ENCODE measurements at regions of chr2 and their contacts with region 1.

Region 1: DNA sequence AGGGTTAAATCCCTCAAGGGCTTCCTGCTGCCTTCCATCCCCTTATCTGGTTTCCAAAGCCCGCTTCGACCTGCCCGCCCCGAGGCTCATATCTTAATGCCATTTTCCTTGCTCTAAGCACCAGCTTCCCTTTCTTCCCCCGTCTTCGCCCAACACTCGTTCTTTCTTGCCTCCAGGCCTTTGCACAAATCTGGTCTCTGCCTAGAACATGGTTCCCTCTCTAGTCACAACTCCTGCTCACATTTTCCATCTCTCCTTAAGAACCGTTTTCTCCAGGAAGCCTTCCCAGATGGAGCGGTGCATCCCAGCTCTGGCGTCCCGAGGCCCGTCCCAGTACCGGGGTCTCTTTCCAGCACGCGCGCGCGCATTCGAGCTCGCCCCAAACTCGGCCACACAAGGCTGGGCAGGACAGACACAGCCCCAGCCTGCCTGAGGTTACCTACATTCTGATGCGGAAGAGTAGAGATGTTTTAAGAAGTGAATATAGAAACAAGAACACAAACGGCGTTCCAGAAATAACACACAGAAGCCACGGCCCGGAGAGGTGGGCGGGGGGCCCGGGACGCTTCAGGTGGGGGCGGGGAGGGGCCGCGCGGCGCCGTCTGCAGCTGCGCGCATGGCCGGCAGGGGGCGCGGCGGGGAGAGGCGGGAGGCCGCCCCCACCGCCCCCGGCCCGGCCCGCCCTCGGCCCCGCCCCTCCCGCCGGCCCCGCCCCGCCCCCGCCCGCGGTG is at the start of gene DGKD:
- DNase-seq: peak; percentile 63 to 86 (median 77)
- ATAC-seq: peak; percentile 90
- H3K4me3 ChIP-seq: peak within 1 kb of the TSS; percentile 83 to 87
- H3K4me3 Mint-ChIP-seq: peak within 1 kb of the TSS; percentile 92
- H3K27ac ChIP-seq: peak within 1 kb of the TSS; percentile 34 to 44
- H3K27ac Mint-ChIP-seq: peak within 1 kb of the TSS; percentile 89
- H3K4me1 ChIP-seq: peaks cover 53% of the 10 kb centered on the region
- H3K4me1 Mint-ChIP-seq: peaks cover 71% of the 10 kb centered on the region
- H3K27me3 ChIP-seq: no peaks in the 10 kb centered on the region
- H3K27me3 Mint-ChIP-seq: no peaks in the 10 kb centered on the region
- CTCF ChIP-seq: no peak
- total RNA-seq, gene DGKD: 209 to 244 TPM

Region 2: DNA sequence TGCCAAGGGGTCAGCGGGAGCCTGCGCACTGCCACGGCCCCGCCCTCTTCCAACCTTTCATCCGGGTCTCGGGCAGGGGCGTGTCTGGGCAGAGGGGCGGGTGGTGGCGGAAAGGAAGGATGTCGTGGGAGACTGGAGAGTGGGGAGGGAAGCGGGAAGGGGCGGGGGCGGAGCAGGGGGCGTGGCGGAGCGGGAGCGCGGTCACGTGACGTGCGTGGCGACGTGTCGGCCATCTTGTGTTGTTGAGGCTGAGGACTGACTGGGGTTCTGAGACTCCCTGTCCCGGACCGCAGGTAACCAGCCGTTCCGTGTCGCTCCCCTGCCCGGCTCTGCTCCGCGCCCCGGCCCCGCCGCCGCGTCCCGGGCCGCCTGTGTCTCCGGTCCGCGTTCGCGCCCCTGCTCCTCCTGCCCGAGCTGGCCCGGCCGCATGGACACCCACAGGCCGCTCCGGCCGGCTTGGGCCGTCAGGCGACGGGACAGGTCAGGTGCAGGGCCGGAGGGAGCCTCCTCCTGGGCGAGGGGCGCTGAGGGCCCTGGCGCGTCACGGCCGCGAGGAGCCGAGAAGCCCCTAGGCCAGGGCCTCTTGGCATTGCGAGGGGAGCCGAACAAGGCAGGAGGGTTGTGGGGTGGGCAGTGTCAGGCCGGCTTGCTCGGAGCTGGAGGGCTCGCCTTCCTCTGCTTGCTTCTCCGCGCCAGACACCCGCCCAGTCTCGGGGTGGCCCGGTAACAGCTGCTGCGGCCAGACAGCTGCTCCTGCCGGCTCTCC is 656.7 kb before region 1 on chr2 and contains the start of gene GIGYF2:
- CTCF ChIA-PET with region 1: no interaction called
- POLR2A ChIA-PET with region 1: no interaction called
- intact Hi-C with region 1: loop called in 1 of 2 experiments (anchors 5 kb)
- DNase-seq: peak; percentile 78 to 95 (median 91)
- ATAC-seq: peak; percentile 83
- H3K4me3 ChIP-seq: peak within 1 kb of the TSS; percentile 89 to 92
- H3K4me3 Mint-ChIP-seq: peak within 1 kb of the TSS; percentile 94
- H3K27ac ChIP-seq: peak within 1 kb of the TSS; percentile 74 to 75
- H3K27ac Mint-ChIP-seq: peak within 1 kb of the TSS; percentile 89
- H3K4me1 ChIP-seq: peaks cover 41% of the 10 kb centered on the region
- H3K4me1 Mint-ChIP-seq: peaks cover 37% of the 10 kb centered on the region
- H3K27me3 ChIP-seq: no peaks in the 10 kb centered on the region
- H3K27me3 Mint-ChIP-seq: no peaks in the 10 kb centered on the region
- CTCF ChIP-seq: no peak
- total RNA-seq, gene GIGYF2: 40.5 to 52.2 TPM

Region 3: DNA sequence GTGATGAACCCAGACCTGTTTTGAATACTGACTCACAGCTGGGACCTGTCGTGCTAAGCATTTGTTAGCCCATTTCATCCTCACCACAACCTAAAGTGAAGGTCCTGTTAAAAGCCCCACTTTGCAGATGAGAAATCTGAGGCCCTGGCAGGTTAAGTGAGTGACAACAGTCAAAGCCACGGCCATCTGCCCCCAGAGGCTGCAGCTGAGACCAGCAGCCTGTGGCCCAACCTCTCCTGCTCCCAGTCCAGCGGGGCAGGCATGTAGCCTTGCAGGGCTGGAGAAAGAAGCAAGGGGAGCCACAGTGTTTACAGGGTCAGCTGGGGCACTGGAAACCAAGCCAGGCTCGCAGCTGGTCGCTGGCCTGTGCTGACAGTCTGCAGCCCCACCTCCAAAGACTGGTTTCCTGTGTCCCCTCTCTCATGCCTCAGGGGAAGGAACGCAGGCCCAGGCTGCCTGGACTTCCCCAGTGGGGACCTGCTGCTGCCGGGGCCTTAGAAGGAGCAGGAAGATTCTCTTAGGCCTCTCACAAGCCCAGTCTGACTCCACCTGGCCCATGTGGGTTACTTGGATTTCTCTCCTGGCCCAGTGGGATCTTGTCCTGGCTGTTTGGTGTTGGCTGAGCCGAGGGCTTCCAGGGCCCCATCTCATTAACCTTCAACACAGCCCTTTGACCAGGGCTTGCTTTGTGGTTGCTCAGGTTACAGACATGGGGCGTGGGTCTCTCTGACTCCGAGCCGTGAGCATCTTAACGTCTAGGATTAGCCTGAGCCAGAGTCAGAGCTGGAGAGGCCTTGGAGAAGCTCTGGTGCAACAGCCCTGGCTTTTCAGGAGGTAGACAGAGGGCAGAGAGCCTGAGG is 292.1 kb before region 1 on chr2:
- CTCF ChIA-PET with region 1: no interaction called
- POLR2A ChIA-PET with region 1: no interaction called
- intact Hi-C with region 1: loop called in 1 of 2 experiments (anchors 10 kb)
- DNase-seq: peak in 4 of 9 experiments; percentile 35 to 61 (median 45)
- ATAC-seq: peak; percentile 9
- H3K4me3 ChIP-seq: peak overlapping the region; percentile 75 to 83
- H3K4me3 Mint-ChIP-seq: peak overlapping the region; percentile 95
- H3K27ac ChIP-seq: peak overlapping the region; percentile 64 to 95
- H3K27ac Mint-ChIP-seq: peak overlapping the region; percentile 94
- H3K4me1 ChIP-seq: peaks cover 44% of the 10 kb centered on the region
- H3K4me1 Mint-ChIP-seq: peaks cover 55% of the 10 kb centered on the region
- H3K27me3 ChIP-seq: no peaks in the 10 kb centered on the region
- H3K27me3 Mint-ChIP-seq: no peaks in the 10 kb centered on the region
- CTCF ChIP-seq: no peak

Region 4: DNA sequence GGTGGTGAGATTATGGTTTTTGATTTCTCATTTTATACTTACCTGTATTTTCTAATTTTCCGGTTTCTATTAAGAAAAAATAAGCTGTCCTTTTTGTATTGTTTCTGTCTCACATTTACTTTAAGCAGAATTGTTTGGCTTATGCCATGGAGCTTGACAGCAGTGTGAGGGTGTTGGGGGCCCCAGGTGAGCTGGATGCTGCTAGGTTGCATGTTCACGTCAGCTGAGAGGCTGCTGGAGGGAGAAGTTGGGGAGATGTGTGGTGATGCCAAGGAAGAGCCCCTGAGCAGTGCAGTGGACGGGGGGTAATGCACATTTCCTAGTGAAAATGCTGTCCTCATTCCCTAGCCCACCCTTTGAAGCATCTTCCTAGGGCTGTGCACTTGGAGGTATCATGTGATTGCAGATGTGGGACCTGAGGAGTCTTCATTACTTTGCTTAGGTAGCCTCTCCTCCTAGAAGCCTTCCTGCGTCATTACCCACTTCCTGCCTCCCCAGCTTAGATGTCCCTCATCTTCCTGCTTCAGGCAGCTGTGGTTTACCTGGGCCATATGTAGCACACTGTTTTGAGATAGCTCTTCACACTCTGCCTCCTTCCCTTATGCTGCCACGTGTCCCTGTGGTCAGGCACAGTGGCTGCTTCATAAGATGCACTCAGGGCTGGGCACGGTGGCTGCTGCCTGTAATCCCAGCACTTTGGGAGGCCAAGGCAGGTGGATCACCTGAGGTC is 86.3 kb before region 1 on chr2:
- CTCF ChIA-PET with region 1: interaction called, 13 read pairs
- POLR2A ChIA-PET with region 1: interaction called, 3 read pairs
- intact Hi-C with region 1: loop called (anchors 1 to 5 kb)
- DNase-seq: peak; percentile 68 to 98 (median 84)
- ATAC-seq: peak; percentile 89
- H3K4me3 ChIP-seq: peak overlapping the region in 1 of 2 experiments; percentile 2
- H3K4me3 Mint-ChIP-seq: peak overlapping the region; percentile 68
- H3K27ac ChIP-seq: peak overlapping the region; percentile 62 to 95
- H3K27ac Mint-ChIP-seq: peak overlapping the region; percentile 94
- H3K4me1 ChIP-seq: peaks cover 59% of the 10 kb centered on the region
- H3K4me1 Mint-ChIP-seq: peaks cover 75% of the 10 kb centered on the region
- H3K27me3 ChIP-seq: no peaks in the 10 kb centered on the region
- H3K27me3 Mint-ChIP-seq: no peaks in the 10 kb centered on the region
- CTCF ChIP-seq: no peak

Region 5: GRCh38 chr2:233288719-233289118 is 65.2 kb before region 1 on chr2:
- CTCF ChIA-PET with region 1: no interaction called
- POLR2A ChIA-PET with region 1: no interaction called
- intact Hi-C with region 1: no loop called
- DNase-seq: no peak
- ATAC-seq: no peak
- H3K4me3 ChIP-seq: no peak overlapping the region
- H3K4me3 Mint-ChIP-seq: no peak overlapping the region
- H3K27ac ChIP-seq: peak overlapping the region in 1 of 2 experiments; percentile 4
- H3K27ac Mint-ChIP-seq: peak overlapping the region; percentile 49
- H3K4me1 ChIP-seq: peaks cover 3% of the 10 kb centered on the region
- H3K4me1 Mint-ChIP-seq: peaks cover 17% of the 10 kb centered on the region
- H3K27me3 ChIP-seq: no peaks in the 10 kb centered on the region
- H3K27me3 Mint-ChIP-seq: no peaks in the 10 kb centered on the region
- CTCF ChIP-seq: no peak

Region 6: DNA sequence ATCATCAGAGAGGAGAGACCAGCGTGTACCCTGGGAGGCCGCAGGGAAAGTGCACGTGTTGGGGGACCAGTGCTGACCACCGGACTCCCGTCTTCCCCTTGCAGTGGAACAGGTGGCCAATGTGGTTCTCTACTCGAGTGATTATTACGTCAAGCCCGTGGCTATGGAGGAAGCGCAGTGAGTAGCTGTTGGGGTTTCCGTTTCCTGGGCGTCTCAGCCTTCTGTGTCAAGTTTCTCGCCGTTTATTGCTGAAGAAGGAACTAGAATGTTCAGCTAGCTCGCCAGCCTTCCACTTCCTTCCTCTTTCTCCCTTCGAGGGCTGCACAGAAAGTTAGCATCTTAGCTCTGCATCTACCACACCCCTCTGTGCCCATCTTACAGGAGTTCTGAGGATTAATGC is 22.4 kb before region 1 on chr2:
- CTCF ChIA-PET with region 1: interaction called, 9 read pairs
- POLR2A ChIA-PET with region 1: interaction called, 15 read pairs
- intact Hi-C with region 1: loop called (anchors 1 kb)
- DNase-seq: peak; percentile 61 to 96 (median 83)
- ATAC-seq: peak; percentile 92
- H3K4me3 ChIP-seq: peak overlapping the region; percentile 2 to 5
- H3K4me3 Mint-ChIP-seq: peak overlapping the region; percentile 29
- H3K27ac ChIP-seq: peak overlapping the region; percentile 66 to 89
- H3K27ac Mint-ChIP-seq: peak overlapping the region; percentile 96
- H3K4me1 ChIP-seq: peaks cover 53% of the 10 kb centered on the region
- H3K4me1 Mint-ChIP-seq: peaks cover 48% of the 10 kb centered on the region
- H3K27me3 ChIP-seq: no peaks in the 10 kb centered on the region
- H3K27me3 Mint-ChIP-seq: no peaks in the 10 kb centered on the region
- CTCF ChIP-seq: no peak

Region 7: GRCh38 chr2:233387667-233388528 is 34.0 kb after region 1 on chr2:
- CTCF ChIA-PET with region 1: interaction called, 6 read pairs
- POLR2A ChIA-PET with region 1: interaction called, 3 read pairs
- intact Hi-C with region 1: loop called (anchors 2 kb)
- DNase-seq: peak in 4 of 9 experiments; percentile 34 to 71 (median 52)
- ATAC-seq: peak; percentile 41
- H3K4me3 ChIP-seq: no peak overlapping the region
- H3K4me3 Mint-ChIP-seq: peak overlapping the region; percentile 75
- H3K27ac ChIP-seq: peak overlapping the region in 1 of 2 experiments; percentile 78
- H3K27ac Mint-ChIP-seq: peak overlapping the region; percentile 96
- H3K4me1 ChIP-seq: peaks cover 68% of the 10 kb centered on the region
- H3K4me1 Mint-ChIP-seq: peaks cover 75% of the 10 kb centered on the region
- H3K27me3 ChIP-seq: no peaks in the 10 kb centered on the region
- H3K27me3 Mint-ChIP-seq: no peaks in the 10 kb centered on the region
- CTCF ChIP-seq: no peak

Region 8: GRCh38 chr2:233404222-233404621 is 50.3 kb after region 1 on chr2:
- CTCF ChIA-PET with region 1: interaction called, 5 read pairs
- POLR2A ChIA-PET with region 1: interaction called, 3 read pairs
- intact Hi-C with region 1: loop called (anchors 5 kb)
- DNase-seq: peak; percentile 45 to 84 (median 73)
- ATAC-seq: peak; percentile 77
- H3K4me3 ChIP-seq: no peak overlapping the region
- H3K4me3 Mint-ChIP-seq: peak overlapping the region; percentile 26
- H3K27ac ChIP-seq: no peak overlapping the region
- H3K27ac Mint-ChIP-seq: peak overlapping the region; percentile 87
- H3K4me1 ChIP-seq: peaks cover 77% of the 10 kb centered on the region
- H3K4me1 Mint-ChIP-seq: peaks cover 81% of the 10 kb centered on the region
- H3K27me3 ChIP-seq: no peaks in the 10 kb centered on the region
- H3K27me3 Mint-ChIP-seq: no peaks in the 10 kb centered on the region
- CTCF ChIP-seq: peak; percentile 90

Region 9: GRCh38 chr2:233556756-233557736 is 203.1 kb after region 1 on chr2:
- CTCF ChIA-PET with region 1: no interaction called
- POLR2A ChIA-PET with region 1: no interaction called
- intact Hi-C with region 1: no loop called
- DNase-seq: no peak
- ATAC-seq: no peak
- H3K4me3 ChIP-seq: no peak overlapping the region
- H3K4me3 Mint-ChIP-seq: no peak overlapping the region
- H3K27ac ChIP-seq: no peak overlapping the region
- H3K27ac Mint-ChIP-seq: peak overlapping the region; percentile 80
- H3K4me1 ChIP-seq: peaks cover 7% of the 10 kb centered on the region
- H3K4me1 Mint-ChIP-seq: peaks cover 9% of the 10 kb centered on the region
- H3K27me3 ChIP-seq: no peaks in the 10 kb centered on the region
- H3K27me3 Mint-ChIP-seq: no peaks in the 10 kb centered on the region
- CTCF ChIP-seq: no peak

Region 10: GRCh38 chr2:233674995-233675394 is 321.1 kb after region 1 on chr2:
- CTCF ChIA-PET with region 1: no interaction called
- POLR2A ChIA-PET with region 1: no interaction called
- intact Hi-C with region 1: no loop called
- DNase-seq: no peak
- ATAC-seq: no peak
- H3K4me3 ChIP-seq: no peak overlapping the region
- H3K4me3 Mint-ChIP-seq: no peak overlapping the region
- H3K27ac ChIP-seq: no peak overlapping the region
- H3K27ac Mint-ChIP-seq: no peak overlapping the region
- H3K4me1 ChIP-seq: no peaks in the 10 kb centered on the region
- H3K4me1 Mint-ChIP-seq: no peaks in the 10 kb centered on the region
- H3K27me3 ChIP-seq: peaks cover 0 to 3% of the 10 kb centered on the region in 2 experiments
- H3K27me3 Mint-ChIP-seq: peaks cover 34% of the 10 kb centered on the region
- CTCF ChIP-seq: no peak

Region 11: GRCh38 chr2:234203135-234203984 is 849.4 kb after region 1 on chr2:
- CTCF ChIA-PET with region 1: no interaction called
- POLR2A ChIA-PET with region 1: no interaction called
- intact Hi-C with region 1: no loop called
- DNase-seq: no peak
- ATAC-seq: no peak
- H3K4me3 ChIP-seq: no peak overlapping the region
- H3K4me3 Mint-ChIP-seq: no peak overlapping the region
- H3K27ac ChIP-seq: no peak overlapping the region
- H3K27ac Mint-ChIP-seq: no peak overlapping the region
- H3K4me1 ChIP-seq: no peaks in the 10 kb centered on the region
- H3K4me1 Mint-ChIP-seq: peaks cover 1% of the 10 kb centered on the region
- H3K27me3 ChIP-seq: no peaks in the 10 kb centered on the region
- H3K27me3 Mint-ChIP-seq: no peaks in the 10 kb centered on the region
- CTCF ChIP-seq: no peak

Measured in CD8-positive, alpha-beta T cell (primary cell).